WTC11 (cell line): ENCODE measurements at regions of chr3 and their contacts with region 1.

Region 1: DNA sequence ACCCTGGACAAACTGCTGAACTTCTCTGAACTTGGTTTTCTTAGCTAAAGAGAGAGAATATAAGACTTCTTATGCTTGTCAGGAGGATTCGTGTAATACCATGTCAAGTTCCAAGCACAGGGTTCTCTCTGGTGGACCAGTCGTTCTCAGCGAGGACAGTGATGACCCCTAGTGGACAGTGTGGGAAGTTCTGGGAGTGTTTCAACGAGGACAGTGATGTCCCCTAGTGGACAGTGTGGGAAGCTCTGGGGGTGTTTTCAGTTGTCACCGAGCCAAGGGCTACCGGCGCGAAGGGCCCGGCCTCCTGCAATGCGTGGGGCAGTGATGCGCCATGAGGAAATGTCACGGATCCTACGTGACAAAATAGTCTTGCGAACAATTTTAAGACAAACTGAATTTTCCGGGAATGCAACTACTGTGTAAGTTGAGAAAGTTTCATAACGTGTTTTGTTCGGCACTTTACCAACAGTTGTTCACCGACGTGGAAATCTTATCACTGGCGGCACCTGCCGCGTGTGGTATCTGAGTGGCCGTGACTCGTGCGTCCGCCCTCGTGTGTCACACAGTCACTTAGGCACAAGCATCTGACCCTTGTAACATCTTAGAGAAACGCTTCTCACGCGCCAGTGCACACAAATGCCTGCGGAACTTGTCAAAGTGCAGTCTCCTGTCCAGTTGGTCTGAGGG is 39.3 kb upstream of the MUC4 start:
- DNase-seq: peak; percentile 90
- ATAC-seq: peak; percentile 87
- H3K4me3 Mint-ChIP-seq: no peak overlapping the region
- H3K27ac Mint-ChIP-seq: no peak overlapping the region
- H3K4me1 Mint-ChIP-seq: peaks cover 12% of the 10 kb centered on the region
- H3K27me3 Mint-ChIP-seq: 0 out of 2 replicates have a peak, but pooled peaks cover 4% of the 10 kb centered on the region
- CTCF ChIP-seq: peak; percentile 100

Region 2: GRCh38 chr3:195748661-195749060 is 102.3 kb before region 1 on chr3:
- CTCF ChIA-PET with region 1: interaction called, 20 read pairs
- POLR2A ChIA-PET with region 1: no interaction called
- DNase-seq: no peak
- ATAC-seq: no peak
- H3K4me3 Mint-ChIP-seq: no peak overlapping the region
- H3K27ac Mint-ChIP-seq: no peak overlapping the region
- H3K4me1 Mint-ChIP-seq: no peaks in the 10 kb centered on the region
- H3K27me3 Mint-ChIP-seq: peaks cover 50% of the 10 kb centered on the region
- CTCF ChIP-seq: no peak

Region 3: DNA sequence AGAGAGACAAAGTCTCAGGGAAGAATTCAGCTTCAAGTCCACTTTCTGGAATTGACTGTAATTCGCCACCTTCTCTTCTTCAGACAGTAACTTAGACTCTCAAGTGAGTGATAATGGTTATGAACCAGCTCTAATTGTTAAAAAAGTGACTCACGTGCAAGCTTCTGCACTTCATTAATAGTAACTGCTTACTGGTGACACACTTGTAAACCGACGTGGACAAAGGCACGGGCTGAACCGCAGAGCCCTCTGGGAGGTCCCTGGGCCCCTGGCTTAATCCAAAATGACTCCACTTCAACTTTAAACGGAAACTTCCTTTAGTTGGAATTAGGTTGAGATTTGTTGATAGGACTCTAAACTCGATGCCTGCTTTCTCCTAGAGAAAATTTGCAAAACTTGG is 56.3 kb before region 1 on chr3:
- CTCF ChIA-PET with region 1: no interaction called
- POLR2A ChIA-PET with region 1: no interaction called
- DNase-seq: no peak
- ATAC-seq: no peak
- H3K4me3 Mint-ChIP-seq: no peak overlapping the region
- H3K27ac Mint-ChIP-seq: no peak overlapping the region
- H3K4me1 Mint-ChIP-seq: peaks cover 11% of the 10 kb centered on the region
- H3K27me3 Mint-ChIP-seq: no peaks in the 10 kb centered on the region
- CTCF ChIP-seq: no peak

Region 4: DNA sequence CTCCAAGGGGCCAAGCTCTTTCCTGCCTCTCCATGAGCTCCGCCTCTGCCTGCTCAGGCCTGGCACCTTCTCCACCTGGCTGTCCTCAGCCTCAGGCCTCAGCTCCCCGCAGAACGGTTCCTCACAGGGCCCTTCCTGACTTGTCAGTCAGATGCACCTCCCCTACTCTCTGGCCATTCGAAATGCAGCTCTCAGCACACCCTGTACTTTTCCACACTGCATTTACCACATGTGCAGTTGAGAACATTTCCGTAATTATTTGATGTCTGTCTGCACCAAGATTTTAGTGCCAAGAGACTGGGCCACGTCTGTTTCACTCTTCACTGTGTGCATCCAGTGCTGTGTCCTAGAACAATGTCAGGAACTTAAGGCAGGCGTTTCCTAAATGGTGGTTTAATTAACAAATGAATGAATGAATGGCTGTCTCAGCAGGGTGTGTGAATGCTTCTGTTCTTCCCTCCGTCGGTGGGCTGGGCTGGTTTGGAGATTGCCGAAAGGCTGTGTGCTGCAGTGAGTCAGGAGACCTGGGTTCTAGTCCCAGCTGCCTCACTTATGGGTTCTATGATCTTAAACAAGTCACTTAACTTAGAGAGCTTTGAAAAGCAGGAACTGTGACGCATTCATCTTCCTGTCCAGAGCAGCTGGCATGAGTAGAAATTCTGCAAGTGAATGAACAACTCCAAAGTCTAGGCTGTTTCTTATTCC is 44.6 kb before region 1 on chr3:
- CTCF ChIA-PET with region 1: interaction called, 15 read pairs
- POLR2A ChIA-PET with region 1: no interaction called
- DNase-seq: peak; percentile 73
- ATAC-seq: peak; percentile 77
- H3K4me3 Mint-ChIP-seq: peak overlapping the region; percentile 39
- H3K27ac Mint-ChIP-seq: peak overlapping the region; percentile 98
- H3K4me1 Mint-ChIP-seq: peaks cover 84% of the 10 kb centered on the region
- H3K27me3 Mint-ChIP-seq: peaks cover 4% of the 10 kb centered on the region
- CTCF ChIP-seq: no peak

Region 5: GRCh38 chr3:195839282-195840010 is 11.6 kb before region 1 on chr3:
- CTCF ChIA-PET with region 1: interaction called, 37 read pairs
- POLR2A ChIA-PET with region 1: interaction called, 3 read pairs
- DNase-seq: no peak
- ATAC-seq: peak; percentile 38
- H3K4me3 Mint-ChIP-seq: no peak overlapping the region
- H3K27ac Mint-ChIP-seq: 0 out of 2 replicates have a peak overlapping the region, but pooled peaks have one; percentile 34
- H3K4me1 Mint-ChIP-seq: peaks cover 10% of the 10 kb centered on the region
- H3K27me3 Mint-ChIP-seq: no peaks in the 10 kb centered on the region
- CTCF ChIP-seq: no peak

Region 6: GRCh38 chr3:195886181-195887141 is 35.5 kb after region 1 on chr3:
- CTCF ChIA-PET with region 1: interaction called, 167 read pairs
- POLR2A ChIA-PET with region 1: no interaction called
- DNase-seq: no peak
- ATAC-seq: peak; percentile 23
- H3K4me3 Mint-ChIP-seq: no peak overlapping the region
- H3K27ac Mint-ChIP-seq: peak overlapping the region; percentile 83
- H3K4me1 Mint-ChIP-seq: peaks cover 40% of the 10 kb centered on the region
- H3K27me3 Mint-ChIP-seq: no peaks in the 10 kb centered on the region
- CTCF ChIP-seq: no peak

Region 7: GRCh38 chr3:195909644-195910508 is 58.9 kb after region 1 on chr3:
- CTCF ChIA-PET with region 1: interaction called, 11 read pairs
- POLR2A ChIA-PET with region 1: no interaction called
- DNase-seq: peak; percentile 79
- ATAC-seq: peak; percentile 58
- H3K4me3 Mint-ChIP-seq: peak overlapping the region; percentile 76
- H3K27ac Mint-ChIP-seq: peak overlapping the region; percentile 23; the same call in 1 of the 2 replicates
- H3K4me1 Mint-ChIP-seq: peaks cover 45% of the 10 kb centered on the region
- H3K27me3 Mint-ChIP-seq: peaks cover 9% of the 10 kb centered on the region; the same call in 1 of the 2 replicates
- CTCF ChIP-seq: no peak

Region 8: GRCh38 chr3:196081791-196082618 is 231.0 kb after region 1 on chr3 and contains the start of gene TFRC:
- CTCF ChIA-PET with region 1: no interaction called
- POLR2A ChIA-PET with region 1: no interaction called
- DNase-seq: peak; percentile 97
- ATAC-seq: peak; percentile 89
- H3K4me3 Mint-ChIP-seq: peak within 1 kb of the TSS; percentile 99
- H3K27ac Mint-ChIP-seq: peak within 1 kb of the TSS; percentile 95
- H3K4me1 Mint-ChIP-seq: peaks cover 34% of the 10 kb centered on the region
- H3K27me3 Mint-ChIP-seq: no peaks in the 10 kb centered on the region; the same call in none of the 2 replicates
- CTCF ChIP-seq: no peak
- total RNA-seq, gene TFRC: 92.8 to 143 TPM (median 93.4 TPM) in 3 replicates

Region 9: GRCh38 chr3:196339493-196340254 is 488.7 kb after region 1 on chr3:
- CTCF ChIA-PET with region 1: no interaction called
- POLR2A ChIA-PET with region 1: no interaction called
- DNase-seq: no peak
- ATAC-seq: no peak
- H3K4me3 Mint-ChIP-seq: no peak overlapping the region
- H3K27ac Mint-ChIP-seq: no peak overlapping the region
- H3K4me1 Mint-ChIP-seq: no peaks in the 10 kb centered on the region
- H3K27me3 Mint-ChIP-seq: no peaks in the 10 kb centered on the region; the same call in 1 of the 2 replicates
- CTCF ChIP-seq: no peak